OCI-LY7 (cell line): ENCODE measurements at regions of chr19 and their contacts with region 1.

Region 1: GRCh38 chr19:4638828-4639530 is at the start of gene TNFAIP8L1:
- DNase-seq: peak; percentile 98
- H3K4me3 ChIP-seq: peak within 1 kb of the TSS; percentile 94
- H3K27ac ChIP-seq: peak within 1 kb of the TSS; percentile 90
- H3K4me1 ChIP-seq: peaks cover 33% of the 10 kb centered on the region
- CTCF ChIP-seq: no peak
- total RNA-seq, gene TNFAIP8L1: 9.0 and 10.0 TPM in 2 replicates

Region 2: DNA sequence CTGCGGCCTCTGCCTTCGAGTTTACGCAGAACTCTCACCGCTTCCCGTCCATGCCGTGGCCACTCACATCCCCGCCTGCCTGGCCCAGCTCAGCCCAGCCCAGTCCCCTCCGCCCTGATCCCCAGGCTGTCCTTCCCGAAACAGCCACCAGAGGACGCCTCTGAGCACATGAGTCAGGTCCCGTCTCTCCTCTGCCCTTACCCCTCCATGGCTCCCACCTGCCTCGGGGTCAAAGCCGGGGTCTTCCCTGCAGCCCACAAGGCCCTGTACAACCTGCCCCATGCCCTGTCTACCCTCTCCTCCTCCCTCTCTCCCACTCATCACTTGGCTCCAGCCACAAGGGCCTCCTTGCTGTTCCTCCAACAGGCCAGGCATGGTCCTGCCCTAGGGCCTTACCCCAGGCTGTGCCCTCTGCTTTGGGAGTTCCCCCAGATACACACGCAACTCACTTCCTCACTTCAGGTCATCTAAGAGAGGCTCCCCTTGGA is 71.4 kb before region 1 on chr19:
- CTCF ChIA-PET with region 1: interaction called, 3 read pairs
- POLR2A ChIA-PET with region 1: no interaction called
- intact Hi-C with region 1: loop called (anchors 2 kb)
- DNase-seq: peak; percentile 33
- H3K4me3 ChIP-seq: no peak overlapping the region
- H3K27ac ChIP-seq: no peak overlapping the region
- H3K4me1 ChIP-seq: no peaks in the 10 kb centered on the region
- CTCF ChIP-seq: peak; percentile 80

Region 3: GRCh38 chr19:4669723-4670480 is 30.9 kb after region 1 on chr19 and contains the start of gene MYDGF:
- CTCF ChIA-PET with region 1: no interaction called
- POLR2A ChIA-PET with region 1: no interaction called
- intact Hi-C with region 1: no loop called
- DNase-seq: peak; percentile 93
- H3K4me3 ChIP-seq: peak within 1 kb of the TSS; percentile 97
- H3K27ac ChIP-seq: peak within 1 kb of the TSS; percentile 29
- H3K4me1 ChIP-seq: peaks cover 7% of the 10 kb centered on the region
- CTCF ChIP-seq: no peak
- total RNA-seq, gene MYDGF: 73.3 and 76.0 TPM in 2 replicates

Region 4: DNA sequence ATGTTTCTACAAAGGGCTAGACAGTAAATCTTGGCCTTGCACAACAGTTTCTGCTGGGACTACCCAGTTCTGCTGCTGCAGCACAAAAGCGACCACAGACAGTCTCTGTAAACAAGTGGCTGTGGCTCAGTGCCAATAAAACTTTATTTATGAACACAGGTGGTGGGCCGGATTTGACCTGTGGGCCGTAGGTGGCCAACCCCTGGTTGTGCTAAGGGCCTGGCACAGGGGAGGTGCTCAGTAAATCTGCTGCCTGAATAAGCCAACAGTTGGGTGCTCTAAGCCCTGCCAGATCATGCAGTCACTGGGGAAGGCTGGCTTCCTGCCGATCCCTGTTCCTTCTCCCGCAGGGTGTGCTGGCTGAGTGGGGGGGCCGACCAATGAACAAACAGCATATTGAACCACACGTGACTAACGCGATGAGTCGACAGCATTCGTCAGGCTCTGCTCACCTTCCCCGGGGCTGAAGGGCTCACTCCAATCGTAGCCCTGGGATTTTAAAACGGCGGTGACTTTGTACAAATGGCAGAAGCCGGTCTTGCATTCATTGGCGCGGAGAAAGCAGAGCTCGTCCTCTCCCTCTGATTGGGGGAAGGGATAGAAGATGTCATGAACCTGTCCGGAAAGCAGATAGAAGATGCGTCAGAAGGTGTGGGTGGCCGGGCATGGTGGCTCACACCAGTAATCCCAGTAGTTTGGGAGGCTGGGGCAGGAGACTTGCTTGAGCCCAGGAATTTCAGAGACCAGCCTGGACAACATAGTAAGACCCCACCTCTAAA is 55.4 kb after region 1 on chr19:
- CTCF ChIA-PET with region 1: no interaction called
- POLR2A ChIA-PET with region 1: no interaction called
- intact Hi-C with region 1: no loop called
- DNase-seq: no peak
- H3K4me3 ChIP-seq: no peak overlapping the region
- H3K27ac ChIP-seq: no peak overlapping the region
- H3K4me1 ChIP-seq: no peaks in the 10 kb centered on the region
- CTCF ChIP-seq: no peak

Region 5: DNA sequence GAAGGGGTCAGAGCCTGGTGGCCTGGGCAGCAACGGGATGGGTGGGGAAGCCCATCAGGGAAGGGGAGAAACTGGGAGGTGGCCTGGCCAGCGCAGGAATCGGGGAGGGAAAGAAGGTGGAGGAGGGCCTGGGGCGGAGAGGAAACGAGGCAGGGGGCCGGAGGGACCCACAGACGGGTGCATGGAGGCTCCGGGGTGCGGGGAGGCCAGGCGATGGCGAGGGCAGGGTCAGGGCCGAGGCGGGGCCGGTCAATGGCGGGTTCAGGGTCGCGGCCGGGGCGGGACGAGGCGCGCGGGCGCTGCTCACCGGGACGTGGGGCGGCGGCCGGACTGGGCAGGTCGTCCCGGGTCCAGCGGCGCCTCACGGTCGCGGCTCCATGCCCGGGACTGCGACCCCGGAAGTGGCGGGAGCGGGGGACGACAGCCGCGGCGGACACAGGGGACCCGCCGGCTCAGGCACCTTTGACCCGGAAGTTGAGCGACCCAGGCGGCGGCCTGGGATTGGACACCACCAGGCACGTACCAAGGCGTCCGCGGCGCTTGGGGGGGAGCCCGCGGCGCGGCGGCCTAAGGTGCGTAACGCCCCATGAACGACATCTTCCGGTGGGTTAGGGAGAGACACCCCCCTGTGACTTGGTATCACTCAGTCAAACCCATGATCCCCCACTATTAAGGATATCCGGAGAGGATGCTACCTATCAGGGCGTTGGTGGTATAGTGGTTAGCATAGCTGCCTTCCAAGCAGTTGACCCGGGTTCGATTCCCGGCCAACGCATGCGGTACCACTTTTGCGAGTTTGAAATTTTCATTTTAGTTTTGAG is 84.6 kb after region 1 on chr19 and contains the start of gene DPP9:
- CTCF ChIA-PET with region 1: no interaction called
- POLR2A ChIA-PET with region 1: no interaction called
- intact Hi-C with region 1: loop called (anchors 2 kb)
- DNase-seq: peak; percentile 100
- H3K4me3 ChIP-seq: peak within 1 kb of the TSS; percentile 100
- H3K27ac ChIP-seq: peak within 1 kb of the TSS; percentile 72
- H3K4me1 ChIP-seq: peaks cover 12% of the 10 kb centered on the region
- CTCF ChIP-seq: no peak
- total RNA-seq, gene DPP9: 25.5 and 40.2 TPM in 2 replicates